ENCODE measurements at regions of chr7 and their contacts with region 1.

Region 1: DNA sequence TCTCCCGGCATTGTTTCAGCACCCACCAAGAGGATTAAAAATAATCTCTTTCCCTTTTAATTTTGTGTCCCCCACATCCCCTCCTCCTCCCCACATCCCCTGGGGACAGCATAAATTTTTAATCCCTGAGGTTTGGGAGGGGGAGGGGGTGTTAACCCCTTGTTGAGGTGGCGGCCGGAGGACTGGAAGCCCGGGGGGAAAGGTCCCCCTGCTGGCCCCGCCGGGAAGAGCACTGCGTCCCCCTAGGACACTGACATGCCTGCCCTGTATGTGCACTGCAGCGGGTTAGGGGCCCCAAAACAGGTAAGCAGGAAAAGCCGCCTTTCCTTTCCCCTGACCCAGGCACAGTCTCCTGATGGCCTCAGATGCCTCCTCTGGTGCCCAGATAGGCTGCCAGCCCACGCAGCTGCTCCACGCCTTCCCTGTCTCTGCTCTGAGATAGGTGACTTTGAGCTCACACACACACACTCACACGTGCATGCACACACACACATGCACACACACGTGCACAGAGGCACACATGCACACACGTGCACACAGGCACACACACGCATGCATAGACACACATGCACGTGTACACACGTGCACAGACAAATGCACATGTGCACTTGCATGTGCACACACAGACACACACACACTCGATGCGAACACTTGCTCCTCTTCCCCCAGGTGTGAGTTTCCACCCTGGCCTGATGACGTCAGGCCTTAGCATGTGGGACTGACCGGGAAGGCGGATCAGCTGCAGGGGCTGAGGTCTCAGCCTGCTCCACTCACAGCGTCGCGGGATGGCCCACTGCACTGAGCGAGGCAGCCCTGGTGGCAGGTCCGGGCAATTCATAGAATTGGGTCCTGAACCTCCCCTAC is 12.3 kb downstream of the CNPY1 start:
- DNase-seq: peak; percentile 69
- ATAC-seq: peak; percentile 69
- H3K4me3 Mint-ChIP-seq: peak overlapping the region; percentile 37
- H3K27ac Mint-ChIP-seq: no peak overlapping the region
- H3K4me1 Mint-ChIP-seq: peaks cover 15% of the 10 kb centered on the region
- H3K27me3 Mint-ChIP-seq: peaks cover 64% of the 10 kb centered on the region

Region 2: GRCh38 chr7:154781369-154782303 is 752.4 kb before region 1 on chr7:
- CTCF ChIA-PET with region 1: no interaction called
- POLR2A ChIA-PET with region 1: no interaction called
- intact Hi-C with region 1: no loop called
- DNase-seq: no peak
- ATAC-seq: no peak
- H3K4me3 Mint-ChIP-seq: no peak overlapping the region
- H3K27ac Mint-ChIP-seq: no peak overlapping the region
- H3K4me1 Mint-ChIP-seq: peaks cover 2% of the 10 kb centered on the region
- H3K27me3 Mint-ChIP-seq: no peaks in the 10 kb centered on the region

Region 3: GRCh38 chr7:154913638-154914312 is 620.3 kb before region 1 on chr7:
- CTCF ChIA-PET with region 1: interaction called, 3 read pairs
- POLR2A ChIA-PET with region 1: no interaction called
- intact Hi-C with region 1: loop called in 1 of 2 experiments (anchors 10 kb)
- DNase-seq: peak; percentile 94
- ATAC-seq: peak; percentile 99
- H3K4me3 Mint-ChIP-seq: peak overlapping the region; percentile 56
- H3K27ac Mint-ChIP-seq: no peak overlapping the region
- H3K4me1 Mint-ChIP-seq: peaks cover 5% of the 10 kb centered on the region
- H3K27me3 Mint-ChIP-seq: peaks cover 10% of the 10 kb centered on the region

Region 4: DNA sequence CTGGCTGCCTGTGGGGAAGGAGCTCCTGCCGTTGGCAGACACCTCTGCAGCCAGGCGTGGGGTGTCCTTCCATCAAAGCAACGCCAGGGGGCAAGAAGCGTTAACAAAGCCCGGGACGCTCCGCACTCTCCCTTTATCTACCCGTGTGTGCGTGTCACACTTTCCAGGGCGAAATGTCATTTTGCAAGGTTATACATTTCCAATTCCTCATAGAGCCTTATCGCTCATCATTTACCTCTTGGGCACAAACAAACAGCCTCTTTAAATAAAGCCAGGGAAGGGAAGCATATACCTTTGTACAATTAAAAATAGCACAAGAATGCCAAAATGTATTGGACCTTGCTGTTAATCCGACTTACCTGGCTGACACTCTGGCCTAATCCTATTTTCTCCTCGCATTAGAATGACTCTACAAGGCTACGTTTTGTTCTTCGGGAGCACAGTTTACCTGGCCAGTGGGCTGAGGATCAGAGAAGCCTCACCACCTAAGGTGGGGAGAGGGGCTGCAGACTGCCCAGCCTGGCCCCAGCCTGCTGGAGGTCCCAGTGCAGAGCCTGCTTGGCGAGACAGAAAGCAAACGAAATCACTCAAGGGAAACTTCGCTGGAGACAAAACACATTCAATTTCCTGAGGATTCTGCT is 153.7 kb before region 1 on chr7:
- CTCF ChIA-PET with region 1: interaction called, 5 read pairs
- POLR2A ChIA-PET with region 1: interaction called, 5 read pairs
- intact Hi-C with region 1: loop called (anchors 1 to 5 kb)
- DNase-seq: peak; percentile 89
- ATAC-seq: peak; percentile 94
- H3K4me3 Mint-ChIP-seq: no peak overlapping the region
- H3K27ac Mint-ChIP-seq: no peak overlapping the region
- H3K4me1 Mint-ChIP-seq: peaks cover 23% of the 10 kb centered on the region
- H3K27me3 Mint-ChIP-seq: peaks cover 79% of the 10 kb centered on the region

Region 5: DNA sequence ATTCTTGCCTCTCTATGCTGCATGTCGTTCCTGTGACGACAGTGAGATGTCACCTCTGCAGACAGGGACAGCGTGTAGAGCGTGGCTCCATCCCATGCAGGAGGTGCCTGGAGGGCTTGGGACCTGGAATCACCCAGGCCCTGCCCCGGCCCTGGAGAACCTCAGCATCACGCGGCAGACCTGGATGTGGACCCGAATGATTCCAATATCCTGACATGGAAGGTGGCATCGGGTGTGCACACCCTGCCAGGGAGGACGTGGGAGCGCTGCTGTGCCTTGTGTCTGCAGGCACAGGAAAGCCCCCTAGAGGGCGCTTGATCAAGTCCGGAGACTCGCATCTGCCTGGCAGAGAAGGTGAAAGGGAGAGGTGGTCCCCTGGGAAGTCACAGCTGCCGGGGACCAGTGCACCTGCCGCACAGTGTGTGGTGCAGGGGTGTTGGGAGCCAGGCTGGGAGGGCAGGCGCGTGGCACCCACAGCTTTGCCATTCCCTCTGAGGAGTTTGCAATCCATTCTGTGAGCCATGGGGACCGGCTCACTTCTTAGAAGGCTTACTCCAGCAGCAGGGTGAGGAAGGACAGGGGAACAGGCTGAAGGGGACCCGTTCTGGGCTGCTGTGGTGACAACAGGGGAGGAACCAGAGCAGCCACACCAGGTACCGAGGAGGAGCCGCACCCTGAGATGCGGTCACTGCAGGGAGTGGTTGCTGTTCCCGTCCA is 121.4 kb before region 1 on chr7:
- CTCF ChIA-PET with region 1: no interaction called
- POLR2A ChIA-PET with region 1: no interaction called
- intact Hi-C with region 1: loop called in 1 of 2 experiments (anchors 1 kb)
- DNase-seq: peak; percentile 77
- ATAC-seq: peak; percentile 87
- H3K4me3 Mint-ChIP-seq: no peak overlapping the region
- H3K27ac Mint-ChIP-seq: no peak overlapping the region
- H3K4me1 Mint-ChIP-seq: no peaks in the 10 kb centered on the region
- H3K27me3 Mint-ChIP-seq: peaks cover 14% of the 10 kb centered on the region

Region 6: DNA sequence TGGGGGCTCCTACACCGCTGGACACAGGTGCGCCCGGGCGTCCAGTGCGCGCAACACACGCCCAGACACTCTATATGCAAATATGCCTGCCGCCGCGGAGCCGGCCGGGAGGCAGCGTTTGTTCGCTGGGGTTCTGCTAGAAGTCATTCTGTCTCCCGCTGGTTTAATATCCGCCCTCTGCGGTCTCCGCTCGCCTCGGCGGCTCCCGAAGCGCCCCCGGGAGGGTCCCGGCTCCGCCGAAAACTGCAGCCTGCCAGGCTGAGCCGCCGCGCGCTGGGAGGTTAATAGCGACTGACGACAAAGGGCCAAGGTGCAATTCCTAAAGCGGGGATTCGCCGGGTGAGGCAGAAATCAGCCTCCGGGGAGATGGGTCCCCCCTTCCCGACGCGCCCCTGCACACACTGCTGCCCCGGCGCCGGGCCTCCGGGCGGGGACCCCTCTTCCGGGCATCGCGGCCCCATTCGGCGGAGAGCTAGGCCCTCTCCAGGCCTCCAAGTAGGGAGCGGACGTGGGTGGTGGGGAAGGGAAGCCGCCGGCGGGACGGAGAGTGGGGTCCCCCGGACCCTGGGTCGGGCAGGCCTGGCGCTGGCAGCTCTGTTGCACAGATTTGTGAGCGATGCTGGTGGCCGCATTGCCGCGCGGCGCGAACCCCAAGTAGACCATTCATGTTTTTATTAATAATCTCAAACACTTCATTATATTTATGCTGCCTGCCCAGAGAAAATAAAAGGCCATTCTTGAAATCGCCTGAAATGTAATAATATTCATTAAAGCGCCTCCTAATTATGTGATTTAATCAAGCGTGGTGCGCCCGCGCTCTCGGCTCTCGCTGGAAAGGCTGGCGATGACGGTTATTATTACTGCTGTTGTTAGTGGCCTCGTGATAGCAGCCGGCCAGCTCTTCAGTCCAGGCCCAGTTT is 67.0 kb before region 1 on chr7:
- CTCF ChIA-PET with region 1: interaction called, 3 read pairs
- POLR2A ChIA-PET with region 1: no interaction called
- intact Hi-C with region 1: loop called in 1 of 2 experiments (anchors 2 kb)
- DNase-seq: peak; percentile 81
- ATAC-seq: peak; percentile 70
- H3K4me3 Mint-ChIP-seq: no peak overlapping the region
- H3K27ac Mint-ChIP-seq: no peak overlapping the region
- H3K4me1 Mint-ChIP-seq: peaks cover 11% of the 10 kb centered on the region
- H3K27me3 Mint-ChIP-seq: peaks cover 76% of the 10 kb centered on the region

Region 7: GRCh38 chr7:155512246-155512887 is 21.7 kb before region 1 on chr7:
- CTCF ChIA-PET with region 1: interaction called, 5 read pairs
- POLR2A ChIA-PET with region 1: no interaction called
- intact Hi-C with region 1: loop called (anchors 2 kb)
- DNase-seq: no peak
- ATAC-seq: no peak
- H3K4me3 Mint-ChIP-seq: no peak overlapping the region
- H3K27ac Mint-ChIP-seq: no peak overlapping the region
- H3K4me1 Mint-ChIP-seq: peaks cover 19% of the 10 kb centered on the region
- H3K27me3 Mint-ChIP-seq: peaks cover 62% of the 10 kb centered on the region